WTC11 (cell line): ENCODE measurements at regions of chr1 and their contacts with region 1.

Region 1: GRCh38 chr1:27891196-27891889 is 19.0 kb downstream of the THEMIS2 start:
- DNase-seq: no peak
- ATAC-seq: no peak
- H3K4me3 Mint-ChIP-seq: no peak overlapping the region
- H3K27ac Mint-ChIP-seq: peak overlapping the region; percentile 11; the same call in 1 of the 2 replicates
- H3K4me1 Mint-ChIP-seq: no peaks in the 10 kb centered on the region
- H3K27me3 Mint-ChIP-seq: no peaks in the 10 kb centered on the region
- CTCF ChIP-seq: no peak

Region 2: GRCh38 chr1:27752360-27752759 is 139.0 kb before region 1 on chr1:
- CTCF ChIA-PET with region 1: no interaction called
- POLR2A ChIA-PET with region 1: no interaction called
- DNase-seq: no peak
- ATAC-seq: no peak
- H3K4me3 Mint-ChIP-seq: no peak overlapping the region
- H3K27ac Mint-ChIP-seq: no peak overlapping the region
- H3K4me1 Mint-ChIP-seq: no peaks in the 10 kb centered on the region
- H3K27me3 Mint-ChIP-seq: no peaks in the 10 kb centered on the region
- CTCF ChIP-seq: no peak

Region 3: GRCh38 chr1:27864264-27864895 is 27.0 kb before region 1 on chr1:
- CTCF ChIA-PET with region 1: no interaction called
- POLR2A ChIA-PET with region 1: no interaction called
- DNase-seq: no peak
- ATAC-seq: no peak
- H3K4me3 Mint-ChIP-seq: no peak overlapping the region
- H3K27ac Mint-ChIP-seq: no peak overlapping the region
- H3K4me1 Mint-ChIP-seq: peaks cover 6% of the 10 kb centered on the region; the same call in 1 of the 2 replicates
- H3K27me3 Mint-ChIP-seq: no peaks in the 10 kb centered on the region
- CTCF ChIP-seq: no peak

Region 4: DNA sequence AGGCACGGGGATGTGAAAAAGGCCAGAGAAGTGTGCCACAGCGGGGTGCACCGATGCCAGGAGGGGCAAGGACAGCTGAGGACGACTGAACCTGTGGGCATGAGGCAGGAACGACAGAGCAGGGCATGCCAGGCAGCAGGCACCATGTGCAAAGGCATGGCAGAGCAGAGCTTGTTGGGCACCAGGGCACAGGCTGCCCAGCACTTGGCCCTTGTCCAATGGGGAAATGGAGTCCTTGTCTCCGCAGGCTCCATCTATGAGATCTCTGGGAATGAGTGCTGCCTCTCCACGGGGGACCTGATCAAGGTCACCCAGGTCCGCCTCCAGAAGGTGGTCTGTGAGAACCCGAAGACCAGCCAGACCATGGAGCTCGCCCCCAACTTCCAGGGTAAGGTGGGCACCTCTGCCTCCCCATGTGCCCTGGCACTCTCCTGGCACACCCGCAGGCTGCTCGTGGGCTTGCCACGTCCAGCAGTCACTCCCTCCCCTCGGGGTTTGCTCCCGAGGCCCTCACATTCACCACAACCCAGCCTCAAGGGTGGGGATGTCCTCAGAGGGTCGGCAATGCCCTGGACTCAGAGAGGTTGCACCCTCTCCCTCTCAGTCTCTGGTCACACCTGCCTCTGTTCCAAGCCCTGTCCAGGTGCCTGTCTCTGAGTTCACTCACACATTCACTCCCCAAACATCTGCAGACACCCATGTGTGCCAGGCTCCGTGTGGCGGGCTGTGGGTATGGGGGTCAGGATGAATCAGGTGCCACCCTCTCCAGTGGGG is 14.8 kb before region 1 on chr1:
- CTCF ChIA-PET with region 1: interaction called, 4 read pairs
- POLR2A ChIA-PET with region 1: interaction called, 13 read pairs
- DNase-seq: no peak
- ATAC-seq: no peak
- H3K4me3 Mint-ChIP-seq: no peak overlapping the region
- H3K27ac Mint-ChIP-seq: no peak overlapping the region
- H3K4me1 Mint-ChIP-seq: peaks cover 7% of the 10 kb centered on the region
- H3K27me3 Mint-ChIP-seq: peaks cover 6% of the 10 kb centered on the region
- CTCF ChIP-seq: no peak

Region 5: DNA sequence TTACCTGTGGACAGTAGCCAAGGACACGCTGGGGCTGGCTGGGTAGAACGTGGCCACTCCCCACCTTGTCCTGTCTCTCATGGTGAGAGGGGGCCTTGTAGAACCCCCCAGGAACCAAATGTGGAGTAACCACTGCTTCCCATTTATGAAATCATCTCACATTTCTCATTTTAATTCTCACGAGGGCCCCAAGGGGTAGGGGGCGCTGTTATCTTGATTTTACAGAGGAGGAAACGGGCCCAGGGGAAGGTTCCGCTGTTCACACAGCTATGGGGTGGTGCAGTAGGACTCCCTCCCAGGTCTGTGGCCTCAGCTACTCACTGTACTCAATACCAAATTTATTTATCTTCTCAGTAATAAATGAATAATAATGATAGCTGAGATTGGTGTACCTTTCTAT is 49.0 kb after region 1 on chr1:
- CTCF ChIA-PET with region 1: no interaction called
- POLR2A ChIA-PET with region 1: no interaction called
- DNase-seq: peak; percentile 66
- ATAC-seq: peak; percentile 44
- H3K4me3 Mint-ChIP-seq: no peak overlapping the region
- H3K27ac Mint-ChIP-seq: peak overlapping the region; percentile 10; the same call in 1 of the 2 replicates
- H3K4me1 Mint-ChIP-seq: peaks cover 35% of the 10 kb centered on the region
- H3K27me3 Mint-ChIP-seq: no peaks in the 10 kb centered on the region; the same call in 1 of the 2 replicates
- CTCF ChIP-seq: peak; percentile 50; the same call in 1 of the 2 replicates